HCT116 (cell line): ENCODE measurements at regions of chr17 and their contacts with region 1.

Region 1: DNA sequence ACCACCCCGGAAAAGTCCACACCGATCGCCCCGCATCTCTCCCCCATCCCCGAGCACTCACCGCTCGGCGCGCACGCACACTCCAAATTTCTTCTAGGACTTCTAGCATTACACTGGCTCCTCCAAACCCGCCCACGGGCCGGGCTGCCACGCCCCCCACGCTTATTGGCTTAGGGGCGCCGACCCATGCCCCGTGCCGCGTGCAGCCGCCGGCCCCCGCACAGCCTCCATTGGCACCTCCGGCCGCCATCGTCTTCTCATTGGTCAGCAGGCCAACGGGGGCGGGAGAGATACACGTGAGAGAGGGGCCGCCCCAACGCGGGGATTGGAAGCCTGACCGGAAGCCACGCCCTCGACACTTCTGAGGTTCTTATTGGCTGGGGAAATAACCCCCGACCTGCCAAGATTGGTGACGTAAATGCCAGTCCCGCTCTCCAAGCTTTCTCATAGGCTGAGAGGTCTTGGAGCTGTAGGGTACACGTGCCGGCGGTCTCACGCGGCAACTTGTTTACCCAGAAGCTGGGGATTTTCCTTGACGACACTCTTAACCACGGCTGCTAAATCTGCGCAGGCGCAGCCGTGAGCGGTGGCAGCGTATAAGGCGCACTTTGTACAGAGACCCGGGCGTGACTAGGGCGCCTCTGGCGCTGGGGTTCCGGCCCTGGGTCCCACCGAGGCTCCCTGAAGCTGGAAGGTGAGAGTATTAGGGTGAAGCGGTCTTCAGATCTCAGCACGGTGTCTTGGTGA is 4.2 kb upstream of the PER1 start:
- DNase-seq: peak; percentile 100
- ATAC-seq: peak; percentile 66
- H3K4me3 ChIP-seq: peak overlapping the region; percentile 87 to 95
- H3K27ac ChIP-seq: peak overlapping the region; percentile 72
- H3K4me1 ChIP-seq: peaks cover 49 to 94% of the 10 kb centered on the region in 2 experiments
- H3K27me3 ChIP-seq: no peaks in the 10 kb centered on the region
- CTCF ChIP-seq: no peak
- POLR2A ChIP-seq: peak; percentile 41
- RAD21 ChIP-seq: no peak

Region 2: DNA sequence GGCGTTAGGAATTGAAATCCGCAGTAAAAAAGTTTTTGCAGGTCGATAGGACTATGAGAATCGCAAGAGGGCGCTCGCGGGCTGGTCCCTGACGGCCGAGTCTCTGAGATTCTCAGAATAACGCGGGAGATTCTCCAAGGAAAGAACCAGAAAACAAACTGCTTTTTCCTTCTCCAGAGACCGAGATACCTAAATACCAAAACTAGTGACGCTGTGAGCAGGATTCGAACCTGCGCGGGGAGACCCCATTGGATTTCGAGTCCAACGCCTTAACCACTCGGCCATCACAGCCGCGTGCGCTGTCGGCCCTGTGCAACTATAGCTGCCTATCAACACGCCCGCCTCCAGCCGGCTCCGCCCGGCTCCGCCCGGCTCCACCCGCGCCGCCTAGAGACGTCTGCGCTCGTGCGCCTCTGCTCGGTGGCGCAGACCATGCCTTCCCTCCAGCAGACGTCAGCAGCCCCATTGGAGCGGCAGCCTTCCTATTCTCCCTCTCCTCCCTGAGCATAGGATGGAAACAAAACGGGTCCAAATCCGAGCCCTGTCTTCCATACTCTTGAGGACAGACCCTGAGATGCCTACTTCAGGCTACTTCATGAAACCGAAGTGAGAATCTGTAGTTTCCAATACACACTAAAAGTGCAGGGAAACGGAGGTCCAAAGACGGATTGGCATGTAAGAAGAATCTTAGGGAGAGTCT is 17.6 kb before region 1 on chr17:
- CTCF ChIA-PET with region 1: interaction called, 4 read pairs
- POLR2A ChIA-PET with region 1: interaction called, 6 read pairs
- RAD21 ChIA-PET with region 1: no interaction called
- intact Hi-C with region 1: loop called (anchors 1 kb)
- DNase-seq: peak; percentile 95
- ATAC-seq: peak; percentile 89
- H3K4me3 ChIP-seq: peak overlapping the region; percentile 14 to 48; a peak in 3 of 4 replicates
- H3K27ac ChIP-seq: peak overlapping the region; percentile 63
- H3K4me1 ChIP-seq: peaks cover 30 to 61% of the 10 kb centered on the region in 2 experiments
- H3K27me3 ChIP-seq: no peaks in the 10 kb centered on the region
- CTCF ChIP-seq: peak; percentile 86 to 87 (median 87)
- POLR2A ChIP-seq: no peak
- RAD21 ChIP-seq: peak; percentile 88

Region 3: DNA sequence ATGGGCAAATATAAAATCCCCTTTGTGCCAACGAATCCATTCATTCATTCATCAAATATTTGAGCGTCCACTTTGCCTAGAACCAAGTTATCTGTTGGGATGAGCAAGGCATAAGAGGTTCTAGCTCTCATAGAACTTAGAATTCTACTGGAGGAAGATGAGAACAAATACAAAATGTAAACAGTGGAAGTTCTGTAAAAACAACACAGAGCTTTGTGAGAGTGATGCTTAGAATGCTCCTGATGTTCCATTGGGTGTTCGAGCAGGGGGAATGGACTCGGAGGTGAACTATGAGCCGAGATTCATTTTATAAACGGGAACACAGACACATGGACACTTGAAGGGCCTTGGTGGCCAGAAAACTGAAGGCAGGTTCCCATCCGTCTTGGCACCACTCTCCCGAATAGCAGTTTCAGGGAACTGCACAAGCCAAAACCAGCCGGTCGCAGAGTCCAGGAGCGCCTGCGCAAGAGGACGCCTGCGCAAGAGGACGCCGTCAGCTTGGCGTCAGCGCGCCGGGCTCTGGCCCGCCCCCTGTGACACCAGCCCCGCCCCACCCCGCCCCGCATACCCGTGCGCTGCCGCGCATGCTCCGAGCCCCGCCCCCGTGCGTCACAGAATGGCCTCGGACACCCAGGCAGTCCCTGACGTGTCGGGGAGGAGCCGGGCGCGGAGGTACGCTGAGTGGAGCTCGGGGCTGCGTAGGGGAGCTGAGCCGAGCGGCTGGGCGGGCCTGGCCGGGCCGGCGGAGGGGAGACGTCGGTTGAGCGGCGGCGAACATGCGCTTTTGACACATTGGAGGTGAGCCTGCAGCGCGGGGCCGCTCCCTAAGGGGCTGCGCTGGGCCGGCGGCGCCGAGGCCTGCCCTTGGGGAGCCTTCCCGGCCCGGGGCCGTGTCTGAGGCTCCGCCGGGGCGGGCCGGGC is 279.1 kb after region 1 on chr17 and contains the start of gene NDEL1:
- CTCF ChIA-PET with region 1: no interaction called
- POLR2A ChIA-PET with region 1: no interaction called
- RAD21 ChIA-PET with region 1: no interaction called
- intact Hi-C with region 1: no loop called
- DNase-seq: peak; percentile 92
- ATAC-seq: peak; percentile 98
- H3K4me3 ChIP-seq: peak within 1 kb of the TSS; percentile 71 to 94
- H3K27ac ChIP-seq: peak within 1 kb of the TSS; percentile 94
- H3K4me1 ChIP-seq: peaks cover 6 to 20% of the 10 kb centered on the region in 2 experiments
- H3K27me3 ChIP-seq: no peaks in the 10 kb centered on the region
- CTCF ChIP-seq: no peak
- POLR2A ChIP-seq: peak; percentile 96
- RAD21 ChIP-seq: 0 out of 2 replicates have a peak, but pooled peaks have one; percentile 3
- total RNA-seq, gene NDEL1: 39.2 TPM